ENCODE measurements at regions of chr14 and their contacts with region 1.

Region 1: GRCh38 chr14:81504864-81505263 is 28.8 kb downstream of the SEL1L start:
- DNase-seq: no peak
- H3K4me3 Mint-ChIP-seq: no peak overlapping the region
- H3K27ac Mint-ChIP-seq: no peak overlapping the region
- H3K4me1 Mint-ChIP-seq: peaks cover 11% of the 10 kb centered on the region
- H3K27me3 Mint-ChIP-seq: no peaks in the 10 kb centered on the region

Region 2: DNA sequence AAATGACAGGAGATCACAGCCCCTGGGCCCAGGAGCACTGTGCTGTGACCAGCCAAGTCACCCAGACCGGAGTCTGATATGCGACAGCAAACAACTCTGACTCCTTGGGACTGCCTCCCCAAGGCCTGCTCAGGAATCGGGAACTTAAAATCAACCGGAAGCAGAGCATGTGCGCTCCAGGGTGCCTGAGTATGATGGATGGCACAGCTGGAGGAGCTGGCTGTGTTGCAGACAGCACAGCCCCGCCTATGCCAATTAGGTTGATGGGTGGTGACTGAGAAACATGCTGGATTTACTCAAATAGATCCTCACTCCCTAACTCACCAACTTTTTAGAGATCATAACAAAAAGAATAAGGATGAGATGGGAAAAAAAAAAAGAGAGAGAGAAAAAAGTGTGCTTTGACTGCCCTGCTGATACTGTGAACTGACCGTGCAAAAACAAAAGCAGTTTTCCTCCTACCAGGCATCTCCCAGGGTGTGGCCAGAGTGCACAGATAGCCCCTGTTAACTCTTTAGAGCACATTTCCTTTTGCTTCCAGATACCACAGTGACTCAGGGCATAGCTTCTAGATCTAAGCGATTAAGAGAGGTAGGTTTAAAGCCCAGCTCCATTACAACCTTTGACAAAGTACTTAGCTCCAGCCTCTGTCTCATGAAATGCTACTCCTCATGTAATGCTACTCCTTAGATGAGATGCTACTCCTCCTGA is 77.4 kb before region 1 on chr14:
- CTCF ChIA-PET with region 1: no interaction called
- intact Hi-C with region 1: no loop called
- DNase-seq: no peak
- H3K4me3 Mint-ChIP-seq: no peak overlapping the region
- H3K27ac Mint-ChIP-seq: no peak overlapping the region
- H3K4me1 Mint-ChIP-seq: no peaks in the 10 kb centered on the region
- H3K27me3 Mint-ChIP-seq: peaks cover 26% of the 10 kb centered on the region

Region 3: DNA sequence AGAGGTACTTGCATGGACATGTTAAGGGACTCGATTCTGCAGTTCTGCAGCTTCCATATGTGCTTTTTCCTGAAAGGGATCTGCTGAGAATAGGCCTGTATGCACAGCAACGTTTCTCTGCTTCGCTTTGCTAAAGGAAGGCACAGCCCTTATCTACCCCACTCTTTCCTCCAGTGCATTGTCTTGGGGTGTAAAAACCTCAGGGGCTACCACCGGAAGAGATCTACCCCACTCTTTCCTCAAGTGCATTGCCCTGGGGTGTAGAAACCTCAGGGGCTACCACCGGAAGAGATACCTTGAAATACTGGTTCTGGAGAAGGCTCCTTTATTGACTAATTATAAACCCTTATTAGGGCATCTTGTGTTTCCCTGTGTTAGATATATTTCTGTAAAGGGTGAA is 24.1 kb before region 1 on chr14:
- CTCF ChIA-PET with region 1: no interaction called
- intact Hi-C with region 1: loop called (anchors 2 kb)
- DNase-seq: no peak
- H3K4me3 Mint-ChIP-seq: no peak overlapping the region
- H3K27ac Mint-ChIP-seq: peak overlapping the region; percentile 19
- H3K4me1 Mint-ChIP-seq: peaks cover 6% of the 10 kb centered on the region
- H3K27me3 Mint-ChIP-seq: no peaks in the 10 kb centered on the region